IMR-90 (cell line): ENCODE measurements at regions of chr10 and their contacts with region 1.

Region 1: DNA sequence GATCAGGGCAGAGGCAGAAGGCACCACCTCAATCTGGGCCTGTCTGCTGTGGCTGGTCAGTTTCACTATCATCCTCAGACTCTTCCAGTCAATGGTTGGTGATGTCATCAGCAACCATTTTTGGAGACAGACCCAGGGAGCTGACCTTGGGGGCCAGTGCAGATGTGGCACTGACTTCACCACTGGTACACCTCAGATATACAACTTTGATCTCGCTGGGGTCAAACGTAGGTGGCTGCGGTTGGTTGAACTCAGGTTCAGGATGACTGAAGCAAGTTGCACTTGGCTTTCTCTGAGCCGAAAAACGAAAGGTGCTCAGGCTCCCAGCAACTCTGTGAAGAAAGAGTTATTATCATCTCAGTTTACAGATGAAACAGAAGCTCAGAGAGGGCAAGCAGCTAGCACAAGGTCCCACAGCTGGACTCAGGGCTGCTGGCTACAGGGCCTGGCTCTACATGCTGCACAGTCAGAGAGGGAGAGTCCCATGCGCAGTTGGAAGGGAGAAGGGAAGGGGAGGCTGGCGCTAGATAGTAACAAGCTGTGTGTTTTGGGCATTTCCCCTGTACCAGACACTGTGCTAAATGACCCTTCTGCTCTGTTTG is 27.2 kb downstream of the ANKRD16 start:
- DNase-seq: peak; percentile 9
- ATAC-seq: no peak
- H3K4me3 ChIP-seq: no peak overlapping the region
- H3K27ac ChIP-seq: peak overlapping the region; percentile 30; the same call in 1 of the 2 replicates
- H3K4me1 ChIP-seq: peaks cover 10% of the 10 kb centered on the region
- H3K27me3 ChIP-seq: no peaks in the 10 kb centered on the region
- CTCF ChIP-seq: no peak
- POLR2A ChIP-seq: no peak
- RAD21 ChIP-seq: no peak

Region 2: GRCh38 chr10:5829267-5829666 is 33.2 kb before region 1 on chr10:
- CTCF ChIA-PET with region 1: interaction called, 3 read pairs
- POLR2A ChIA-PET with region 1: no interaction called
- dilution Hi-C with region 1: no loop called
- in situ Hi-C with region 1: loop called (anchors 5 kb)
- intact Hi-C with region 1: no loop called
- DNase-seq: no peak
- ATAC-seq: no peak
- H3K4me3 ChIP-seq: no peak overlapping the region
- H3K27ac ChIP-seq: no peak overlapping the region
- H3K4me1 ChIP-seq: no peaks in the 10 kb centered on the region
- H3K27me3 ChIP-seq: no peaks in the 10 kb centered on the region
- CTCF ChIP-seq: no peak
- POLR2A ChIP-seq: no peak
- RAD21 ChIP-seq: no peak